HepG2 (cell line): ENCODE measurements at regions of chr20 and their contacts with region 1.

Region 1: DNA sequence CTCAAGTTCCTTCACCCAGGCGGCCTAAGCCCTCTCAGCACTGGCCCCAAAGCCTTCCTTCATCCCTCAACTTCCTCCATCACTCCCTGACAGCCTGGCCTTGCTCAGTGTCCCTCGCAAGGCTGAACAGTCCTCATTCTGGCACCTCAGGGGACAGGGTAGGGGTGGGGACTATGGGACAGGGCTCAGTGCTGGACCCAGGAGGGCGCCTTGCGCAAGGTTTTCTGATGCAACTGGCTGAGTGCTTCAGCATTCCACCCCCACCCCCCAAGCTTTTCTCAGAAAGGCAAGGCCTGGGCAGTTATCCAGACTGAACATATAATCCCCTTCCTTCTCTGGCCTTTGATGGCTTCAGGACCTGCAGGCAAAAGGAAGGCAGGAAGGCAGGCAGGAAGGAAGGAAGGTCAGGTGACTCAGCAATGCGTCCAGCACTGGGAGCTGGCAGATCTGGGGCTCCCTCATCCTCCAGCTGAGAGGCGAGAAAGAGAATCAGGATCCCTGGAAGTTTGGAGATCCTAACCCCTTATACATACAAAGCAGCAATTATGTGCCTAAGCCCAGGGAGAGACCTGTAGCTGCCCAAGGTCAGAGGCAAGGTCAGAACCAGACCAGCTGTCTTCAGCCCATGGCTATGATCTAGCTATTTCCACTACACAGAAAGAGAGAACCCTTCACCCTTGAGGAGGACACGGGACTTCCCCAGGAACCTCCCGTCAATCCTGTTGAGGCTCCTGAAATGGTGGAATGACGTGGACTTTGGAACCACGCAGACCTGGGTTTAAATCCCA is 8.6 kb upstream of the TRIB3 start:
- DNase-seq: peak; percentile 99
- ATAC-seq: peak; percentile 88
- H3K4me3 ChIP-seq: peak overlapping the region; percentile 1 to 58 (median 5); a peak in 5 of 6 replicates
- H3K27ac ChIP-seq: peak overlapping the region; percentile 88
- H3K4me1 ChIP-seq: peaks cover 69% of the 10 kb centered on the region
- H3K27me3 ChIP-seq: no peaks in the 10 kb centered on the region
- CTCF ChIP-seq: peak; percentile 66
- EP300 ChIP-seq: peak; percentile 98 to 99
- POLR2A ChIP-seq: peak; percentile 64 to 69
- RAD21 ChIP-seq: peak; percentile 81

Region 2: GRCh38 chr20:208942-209566 is 162.9 kb before region 1 on chr20:
- CTCF ChIA-PET with region 1: no interaction called
- POLR2A ChIA-PET with region 1: no interaction called
- in situ Hi-C with region 1: no loop called
- intact Hi-C with region 1: no loop called
- DNase-seq: peak; percentile 64
- ATAC-seq: peak; percentile 92
- H3K4me3 ChIP-seq: no peak overlapping the region
- H3K27ac ChIP-seq: no peak overlapping the region
- H3K4me1 ChIP-seq: no peaks in the 10 kb centered on the region
- H3K27me3 ChIP-seq: peaks cover 1 to 27% of the 10 kb centered on the region in 2 experiments; a peak in 4 of 5 replicates
- CTCF ChIP-seq: peak; percentile 85
- EP300 ChIP-seq: no peak
- POLR2A ChIP-seq: no peak
- RAD21 ChIP-seq: peak; percentile 47

Region 3: DNA sequence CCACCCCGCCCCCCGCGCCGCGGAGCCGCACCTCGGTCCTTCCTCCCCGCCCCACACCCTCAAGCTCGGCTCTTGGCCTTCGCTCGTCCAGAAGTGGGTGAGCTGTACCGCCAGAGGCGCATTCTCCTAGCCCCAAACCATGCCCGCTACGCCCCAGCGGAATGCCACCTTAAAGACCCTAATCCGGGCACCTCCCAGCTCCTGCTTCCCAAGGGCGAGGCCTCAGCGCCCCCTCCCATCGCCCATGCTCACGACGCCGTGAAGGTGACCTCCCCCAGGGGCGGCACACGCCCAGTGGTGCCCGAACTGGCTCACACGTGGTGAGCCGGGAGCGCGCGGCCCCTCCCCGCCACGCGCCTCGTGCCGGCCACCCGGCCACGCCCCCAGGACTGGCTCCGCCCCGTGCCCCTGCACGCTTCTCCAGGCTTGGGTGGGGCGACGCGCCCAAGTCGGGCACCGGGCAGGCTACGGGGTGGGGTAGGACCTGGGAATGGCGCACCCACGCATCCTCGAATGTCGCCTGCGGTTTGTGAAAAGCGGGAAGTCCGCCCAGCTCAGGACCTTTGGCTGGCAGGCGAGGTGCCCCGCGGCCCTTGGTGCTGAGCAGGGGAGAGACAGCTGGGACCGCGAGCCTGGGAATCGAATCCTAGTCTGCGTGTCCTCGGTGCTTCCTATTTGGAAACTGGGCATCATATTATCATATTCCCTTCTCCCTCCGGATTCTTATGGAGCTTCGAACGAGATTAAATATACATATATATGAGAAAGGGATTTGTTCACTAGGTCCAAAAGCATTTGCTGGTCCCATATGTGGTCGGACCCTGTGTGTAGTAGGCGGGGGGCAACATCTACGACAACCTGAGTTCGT is 47.5 kb before region 1 on chr20:
- CTCF ChIA-PET with region 1: no interaction called
- POLR2A ChIA-PET with region 1: interaction called, 36 read pairs
- in situ Hi-C with region 1: no loop called
- intact Hi-C with region 1: no loop called
- DNase-seq: peak; percentile 89
- ATAC-seq: peak; percentile 73
- H3K4me3 ChIP-seq: peak overlapping the region; percentile 70 to 96 (median 84)
- H3K27ac ChIP-seq: peak overlapping the region; percentile 87
- H3K4me1 ChIP-seq: peaks cover 31% of the 10 kb centered on the region
- H3K27me3 ChIP-seq: no peaks in the 10 kb centered on the region; a peak in 1 of 5 replicates
- CTCF ChIP-seq: peak; percentile 51
- EP300 ChIP-seq: peak; percentile 59 to 71; a peak in 3 of 4 replicates
- POLR2A ChIP-seq: peak in 1 of 2 experiments; percentile 86; a peak in 2 of 4 replicates
- RAD21 ChIP-seq: peak; percentile 71

Region 4: DNA sequence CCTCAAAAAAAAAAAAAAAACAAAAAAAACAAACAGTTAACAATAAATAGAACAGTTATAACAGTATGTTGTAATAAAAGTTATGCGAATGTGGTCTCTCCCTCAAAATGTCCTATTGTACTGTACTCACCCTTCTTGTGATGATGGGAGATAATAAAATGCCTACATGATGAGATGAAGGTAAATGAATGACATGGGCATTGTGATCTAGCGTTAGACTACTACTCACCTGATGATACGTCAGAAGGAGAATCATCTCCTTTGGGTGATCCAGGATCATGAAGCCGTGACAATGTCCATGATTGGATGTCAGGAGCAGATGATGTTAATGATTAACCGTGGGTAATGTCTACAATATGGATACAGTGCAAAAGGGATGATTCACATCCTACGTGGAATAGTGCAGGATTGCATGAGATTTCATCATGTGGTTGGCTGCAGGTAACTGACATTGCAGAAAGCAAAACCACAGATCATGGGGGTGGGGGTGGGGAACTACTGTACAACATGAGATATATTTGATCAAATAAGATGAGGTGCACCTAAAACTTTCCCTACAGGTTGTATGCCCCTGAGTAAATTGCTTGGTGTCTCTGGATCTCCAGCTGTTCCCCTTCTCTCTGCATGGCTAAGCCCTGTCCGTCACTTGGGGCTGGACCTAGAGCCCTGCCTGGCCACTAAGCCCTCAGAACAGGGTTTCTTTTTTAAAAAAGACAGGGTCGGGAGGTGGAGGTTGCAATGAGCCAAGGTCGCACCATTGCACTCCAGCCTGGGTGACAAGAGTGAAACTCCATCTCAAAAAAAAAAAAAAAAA is 29.9 kb after region 1 on chr20:
- CTCF ChIA-PET with region 1: no interaction called
- POLR2A ChIA-PET with region 1: interaction called, 1,587 read pairs
- in situ Hi-C with region 1: no loop called
- intact Hi-C with region 1: loop called (anchors 2 kb)
- DNase-seq: peak; percentile 100
- ATAC-seq: peak; percentile 75
- H3K4me3 ChIP-seq: peak overlapping the region in 2 of 3 experiments; percentile 27 to 57; a peak in 2 of 6 replicates
- H3K27ac ChIP-seq: peak overlapping the region; percentile 99
- H3K4me1 ChIP-seq: peaks cover 97% of the 10 kb centered on the region
- H3K27me3 ChIP-seq: no peaks in the 10 kb centered on the region; a peak in 1 of 5 replicates
- CTCF ChIP-seq: no peak
- EP300 ChIP-seq: peak; percentile 97 to 99
- POLR2A ChIP-seq: peak; percentile 78 to 85
- RAD21 ChIP-seq: peak; percentile 36; the same call in 1 of the 2 replicates

Region 5: DNA sequence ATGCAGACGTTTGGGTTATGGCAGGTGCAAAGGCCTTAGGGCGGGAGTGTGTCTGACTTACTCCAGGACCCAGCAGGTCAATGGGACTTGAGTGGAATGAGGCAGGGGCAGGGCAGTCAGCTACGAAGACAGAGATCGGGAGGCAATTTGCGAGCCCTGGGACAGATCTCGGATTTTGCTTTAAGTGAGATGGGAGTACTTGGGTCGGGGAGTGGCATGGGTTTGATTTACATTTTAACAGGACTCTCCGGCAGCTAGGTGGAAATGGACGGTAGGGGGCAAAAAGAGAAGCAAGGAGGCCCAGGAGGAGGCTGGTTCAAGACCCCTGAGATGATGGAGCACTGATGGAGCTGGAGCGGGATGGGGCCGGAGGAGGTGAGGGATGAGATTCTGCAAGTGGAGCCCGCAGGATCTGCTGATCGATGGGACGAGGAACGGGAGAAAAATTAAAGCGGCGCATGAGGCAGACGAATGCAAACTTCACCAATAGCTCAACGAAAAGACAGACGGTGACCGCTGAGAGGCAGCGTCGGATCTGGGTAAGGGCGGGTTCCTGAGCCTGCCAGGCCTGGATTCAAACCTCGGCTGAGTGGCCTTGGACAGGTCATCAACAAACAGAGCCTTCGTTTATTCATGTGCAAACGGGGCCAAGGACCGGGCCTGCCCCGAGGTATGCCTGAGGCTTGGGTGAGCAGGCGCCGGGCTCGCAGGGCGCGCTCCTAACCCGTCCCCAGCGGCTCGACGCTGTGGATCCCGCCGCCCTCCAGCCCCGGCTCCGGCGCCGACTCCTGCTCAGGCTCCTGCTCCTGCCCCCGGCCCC is 35.4 kb after region 1 on chr20:
- CTCF ChIA-PET with region 1: no interaction called
- POLR2A ChIA-PET with region 1: interaction called, 1,587 read pairs
- in situ Hi-C with region 1: no loop called
- intact Hi-C with region 1: loop called (anchors 2 kb)
- DNase-seq: peak; percentile 95
- ATAC-seq: peak; percentile 90
- H3K4me3 ChIP-seq: peak overlapping the region; percentile 49 to 79 (median 57)
- H3K27ac ChIP-seq: peak overlapping the region; percentile 96
- H3K4me1 ChIP-seq: peaks cover 81% of the 10 kb centered on the region
- H3K27me3 ChIP-seq: no peaks in the 10 kb centered on the region; a peak in 1 of 5 replicates
- CTCF ChIP-seq: peak; percentile 57
- EP300 ChIP-seq: peak; percentile 9 to 25; a peak in 1 of 4 replicates
- POLR2A ChIP-seq: peak; percentile 96 to 98
- RAD21 ChIP-seq: peak; percentile 87

Region 6: GRCh38 chr20:415820-416322 is 43.9 kb after region 1 on chr20:
- CTCF ChIA-PET with region 1: no interaction called
- POLR2A ChIA-PET with region 1: interaction called, 15 read pairs
- in situ Hi-C with region 1: no loop called
- intact Hi-C with region 1: no loop called
- DNase-seq: no peak
- ATAC-seq: no peak
- H3K4me3 ChIP-seq: no peak overlapping the region
- H3K27ac ChIP-seq: peak overlapping the region; percentile 30
- H3K4me1 ChIP-seq: peaks cover 48% of the 10 kb centered on the region
- H3K27me3 ChIP-seq: no peaks in the 10 kb centered on the region
- CTCF ChIP-seq: no peak
- EP300 ChIP-seq: no peak
- POLR2A ChIP-seq: no peak
- RAD21 ChIP-seq: no peak

Region 7: GRCh38 chr20:431012-431904 is 59.3 kb after region 1 on chr20:
- CTCF ChIA-PET with region 1: no interaction called
- POLR2A ChIA-PET with region 1: interaction called, 26 read pairs
- in situ Hi-C with region 1: no loop called
- intact Hi-C with region 1: no loop called
- DNase-seq: peak; percentile 93
- ATAC-seq: peak; percentile 84
- H3K4me3 ChIP-seq: no peak overlapping the region
- H3K27ac ChIP-seq: no peak overlapping the region
- H3K4me1 ChIP-seq: 0 out of 2 replicates have a peak, but pooled peaks cover 7% of the 10 kb centered on the region
- H3K27me3 ChIP-seq: no peaks in the 10 kb centered on the region
- CTCF ChIP-seq: peak; percentile 99
- EP300 ChIP-seq: no peak; a peak in 1 of 4 replicates
- POLR2A ChIP-seq: peak in 1 of 2 experiments; percentile 62; a peak in 3 of 4 replicates
- RAD21 ChIP-seq: peak; percentile 100

Region 8: DNA sequence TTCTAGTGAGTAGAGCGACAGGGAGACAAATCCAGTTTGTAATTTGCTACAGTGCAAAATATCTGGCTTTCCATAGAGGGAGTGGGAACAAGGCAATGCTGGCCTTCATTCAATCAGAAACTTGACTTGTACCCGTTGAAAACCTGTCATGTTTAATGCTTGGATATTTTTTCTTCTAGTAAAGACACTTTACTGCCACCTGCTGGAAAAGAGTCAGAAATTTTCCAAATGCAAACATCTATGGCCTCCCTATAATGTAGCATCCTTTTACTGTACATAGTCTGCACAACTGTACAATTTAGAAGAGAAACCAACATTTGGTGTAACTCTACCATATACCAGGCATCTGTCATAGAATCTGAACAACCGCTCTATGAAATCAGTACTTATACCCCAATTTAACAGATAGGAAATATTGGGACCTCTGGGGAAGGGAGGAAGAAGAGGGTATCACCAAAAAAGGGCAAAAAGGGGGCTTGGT is 107.0 kb after region 1 on chr20:
- CTCF ChIA-PET with region 1: no interaction called
- POLR2A ChIA-PET with region 1: interaction called, 14 read pairs
- in situ Hi-C with region 1: no loop called
- intact Hi-C with region 1: no loop called
- DNase-seq: peak; percentile 84
- ATAC-seq: peak; percentile 60
- H3K4me3 ChIP-seq: no peak overlapping the region
- H3K27ac ChIP-seq: no peak overlapping the region
- H3K4me1 ChIP-seq: peaks cover 56% of the 10 kb centered on the region
- H3K27me3 ChIP-seq: no peaks in the 10 kb centered on the region
- CTCF ChIP-seq: peak; percentile 81
- EP300 ChIP-seq: 0 out of 4 replicates have a peak, but pooled peaks of 1 of the 2 experiments have one; percentile 25
- POLR2A ChIP-seq: no peak
- RAD21 ChIP-seq: peak; percentile 82